ENCODE measurements at regions of chr5 and their contacts with region 1.

Region 1: DNA sequence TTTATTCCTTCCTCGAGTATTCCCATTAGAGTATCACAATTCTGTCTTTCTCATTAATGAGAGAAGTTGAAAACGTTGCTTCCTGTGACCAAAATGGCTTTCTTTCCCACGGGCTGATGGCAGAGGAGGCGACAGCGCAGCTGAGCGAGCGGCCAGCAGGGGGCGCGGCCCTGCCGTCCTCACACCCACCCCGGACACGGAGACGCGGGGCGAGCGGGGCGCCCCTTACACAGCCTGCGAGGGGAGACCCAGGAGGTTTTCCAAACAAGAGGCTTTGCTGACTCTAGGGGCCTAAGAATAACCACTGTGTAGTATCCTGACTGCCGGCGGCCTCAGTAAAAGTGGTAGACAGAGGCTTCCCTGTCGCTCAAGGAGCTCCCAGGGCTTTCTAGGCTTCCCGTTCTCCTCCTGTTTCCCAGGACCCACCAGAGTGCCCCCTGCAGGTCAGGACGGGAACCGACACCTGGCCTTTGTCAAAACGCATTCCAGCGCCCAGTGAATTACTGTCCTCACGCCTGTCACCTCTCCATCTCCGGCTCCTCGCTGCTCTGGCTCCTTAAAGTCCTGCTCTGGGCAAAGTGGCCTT is 27.3 kb upstream of the FGF1 start:
- DNase-seq: peak; percentile 93
- ATAC-seq: peak; percentile 84

Region 2: DNA sequence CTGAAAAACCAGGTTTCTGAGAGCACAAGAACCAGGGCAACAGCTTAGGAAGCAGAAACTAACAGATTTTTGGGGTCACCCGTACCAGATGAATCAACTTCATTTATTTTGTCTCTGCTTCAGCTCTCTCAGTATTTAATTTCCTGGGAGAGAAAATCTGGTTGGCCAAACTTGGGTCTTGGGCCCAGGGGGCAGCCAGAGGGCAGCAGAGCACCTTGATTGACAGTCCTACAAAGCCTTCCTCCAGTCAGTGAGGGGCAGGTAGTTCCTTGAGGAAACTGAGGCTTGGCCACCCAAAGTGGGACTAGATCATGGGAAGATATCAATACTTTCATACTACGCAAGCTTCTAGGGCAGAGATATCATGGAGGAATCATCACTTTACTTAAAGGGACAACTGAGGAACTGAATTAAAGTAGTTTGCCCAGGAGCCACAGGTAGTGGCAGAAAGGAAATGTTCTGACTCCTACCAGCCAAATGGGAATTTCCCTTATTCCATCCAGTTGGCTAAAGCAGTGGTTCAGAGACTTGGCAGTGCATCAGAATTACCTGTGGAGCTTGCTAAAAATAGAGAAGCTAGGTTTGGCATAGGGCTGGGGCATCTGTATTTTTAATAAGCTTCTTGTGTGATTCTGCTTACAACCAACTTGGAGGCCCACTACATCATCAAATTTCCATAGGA is 35.5 kb after region 1 on chr5:
- intact Hi-C with region 1: loop called (anchors 2 kb)
- DNase-seq: peak; percentile 68
- ATAC-seq: no peak

Region 3: GRCh38 chr5:142881076-142881783 is 168.0 kb after region 1 on chr5:
- intact Hi-C with region 1: loop called (anchors 1 kb)
- DNase-seq: no peak
- ATAC-seq: no peak